ENCODE measurements at regions of chr4 and their contacts with region 1.

Region 1: GRCh38 chr4:17810260-17811077 is at the starts of genes DCAF16 and NCAPG:
- DNase-seq: peak; percentile 98
- ATAC-seq: peak; percentile 88
- H3K4me3 ChIP-seq: peak within 1 kb of the TSS; percentile 90
- H3K27ac ChIP-seq: peak within 1 kb of the TSS; percentile 90
- H3K4me1 ChIP-seq: peaks cover 8% of the 10 kb centered on the region
- H3K27me3 ChIP-seq: no peaks in the 10 kb centered on the region; a peak in 1 of 4 replicates
- CTCF ChIP-seq: 0 out of 6 replicates have a peak, but pooled peaks of 1 of the 3 experiments have one; percentile 1
- EP300 ChIP-seq: peak; percentile 13 to 32; a peak in 1 of 4 replicates
- POLR2A ChIP-seq: peak; percentile 100
- RAD21 ChIP-seq: no peak
- polyA plus RNA-seq, gene DCAF16: 5.8 to 6.1 TPM
- polyA plus RNA-seq, gene NCAPG: 17.3 to 22.9 TPM

Region 2: GRCh38 chr4:17576932-17577665 is 233.4 kb before region 1 on chr4 and contains the start of gene LAP3:
- CTCF ChIA-PET with region 1: interaction called, 4 read pairs
- POLR2A ChIA-PET with region 1: interaction called, 8 read pairs
- RAD21 ChIA-PET with region 1: interaction called, 6 read pairs
- SMC1A ChIA-PET with region 1: interaction called, 5 read pairs
- in situ Hi-C with region 1: no loop called
- intact Hi-C with region 1: loop called (anchors 1 kb)
- DNase-seq: peak; percentile 91
- ATAC-seq: peak; percentile 90
- H3K4me3 ChIP-seq: peak within 1 kb of the TSS; percentile 97
- H3K27ac ChIP-seq: peak within 1 kb of the TSS; percentile 96
- H3K4me1 ChIP-seq: peaks cover 7% of the 10 kb centered on the region
- H3K27me3 ChIP-seq: no peaks in the 10 kb centered on the region
- CTCF ChIP-seq: no peak
- EP300 ChIP-seq: no peak
- POLR2A ChIP-seq: peak; percentile 99
- RAD21 ChIP-seq: no peak
- polyA plus RNA-seq, gene LAP3: 153 to 206 TPM

Region 3: DNA sequence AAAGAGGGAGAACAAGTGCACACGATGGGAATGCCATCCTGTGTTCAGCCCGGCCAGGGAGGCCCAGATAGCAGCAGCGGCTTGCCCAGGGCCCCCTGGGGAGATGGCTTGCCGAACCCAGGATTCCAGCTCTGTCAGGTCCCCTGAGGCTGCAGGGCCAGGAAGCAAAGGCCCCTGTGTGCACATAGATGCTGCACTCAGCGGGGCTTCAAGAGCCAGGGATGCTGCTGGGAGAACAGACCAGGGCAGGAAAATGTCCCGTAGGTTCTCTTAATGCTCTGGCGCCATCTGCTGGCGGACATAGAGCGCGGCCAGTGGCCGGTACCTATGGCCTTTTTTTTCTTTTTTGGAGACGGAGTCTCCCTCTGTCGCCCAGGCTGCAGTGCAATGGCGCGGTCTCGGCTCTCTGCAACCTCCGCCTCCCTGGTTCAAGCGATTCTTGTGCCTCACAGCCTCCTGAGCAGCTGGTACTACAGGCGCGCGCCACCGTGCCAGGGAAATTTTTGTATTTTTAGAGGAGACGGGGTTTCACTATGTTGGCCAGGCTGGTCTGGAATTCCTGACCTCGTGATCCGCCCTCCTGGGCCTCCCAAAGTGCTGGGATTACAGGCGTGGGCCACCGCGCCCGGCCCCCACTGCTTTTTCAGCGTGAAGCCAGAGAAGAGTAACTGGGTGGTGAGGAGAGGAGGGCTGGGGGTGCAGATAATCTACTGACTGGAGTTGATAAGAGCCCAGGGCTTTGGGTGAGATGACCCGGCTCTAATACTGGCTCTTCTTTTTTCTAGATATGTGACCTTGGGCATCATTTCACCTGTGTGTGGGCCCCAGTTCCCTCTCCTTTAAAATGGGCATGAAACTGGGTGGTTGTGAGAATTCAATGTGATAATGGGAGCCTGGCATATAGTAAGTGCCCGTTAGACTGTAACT is 173.5 kb before region 1 on chr4:
- CTCF ChIA-PET with region 1: interaction called, 8 read pairs
- POLR2A ChIA-PET with region 1: no interaction called
- RAD21 ChIA-PET with region 1: no interaction called
- SMC1A ChIA-PET with region 1: interaction called, 7 read pairs
- in situ Hi-C with region 1: no loop called
- intact Hi-C with region 1: loop called (anchors 2 kb)
- DNase-seq: no peak
- ATAC-seq: peak; percentile 99
- H3K4me3 ChIP-seq: no peak overlapping the region
- H3K27ac ChIP-seq: no peak overlapping the region
- H3K4me1 ChIP-seq: no peaks in the 10 kb centered on the region
- H3K27me3 ChIP-seq: no peaks in the 10 kb centered on the region
- CTCF ChIP-seq: peak; percentile 81 to 87 (median 81)
- EP300 ChIP-seq: no peak
- POLR2A ChIP-seq: peak; percentile 50
- RAD21 ChIP-seq: peak; percentile 80

Region 4: DNA sequence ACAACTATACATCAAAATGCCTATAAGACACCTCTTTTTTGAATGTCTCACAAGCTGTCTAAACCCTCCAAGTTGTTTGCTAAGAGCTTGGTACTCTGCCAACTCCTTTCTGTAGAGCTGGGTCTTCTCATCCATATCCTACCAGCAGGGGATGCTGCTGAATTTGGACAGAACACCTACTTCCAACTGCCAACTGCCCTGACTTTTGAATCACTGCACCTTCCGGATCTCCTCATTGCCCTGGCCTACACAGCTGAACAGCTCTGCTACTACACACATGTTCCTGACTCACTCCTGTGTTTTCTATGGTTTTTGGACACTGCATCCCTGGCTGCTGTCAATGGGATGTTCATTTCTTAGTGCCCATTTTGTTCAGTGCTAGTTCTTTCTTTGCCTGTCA is 47.7 kb before region 1 on chr4:
- CTCF ChIA-PET with region 1: interaction called, 13 read pairs
- POLR2A ChIA-PET with region 1: no interaction called
- RAD21 ChIA-PET with region 1: no interaction called
- SMC1A ChIA-PET with region 1: interaction called, 5 read pairs
- in situ Hi-C with region 1: no loop called
- intact Hi-C with region 1: loop called (anchors 5 kb)
- DNase-seq: no peak
- ATAC-seq: peak; percentile 48; the same call in 2 of the 3 replicates
- H3K4me3 ChIP-seq: no peak overlapping the region
- H3K27ac ChIP-seq: no peak overlapping the region
- H3K4me1 ChIP-seq: no peaks in the 10 kb centered on the region
- H3K27me3 ChIP-seq: no peaks in the 10 kb centered on the region
- CTCF ChIP-seq: peak; percentile 35 to 50 (median 42); a peak in 4 of 6 replicates
- EP300 ChIP-seq: no peak
- POLR2A ChIP-seq: no peak
- RAD21 ChIP-seq: peak; percentile 46

Region 5: GRCh38 chr4:17797808-17798207 is 12.7 kb before region 1 on chr4:
- CTCF ChIA-PET with region 1: interaction called, 41 read pairs
- POLR2A ChIA-PET with region 1: interaction called, 6 read pairs
- RAD21 ChIA-PET with region 1: interaction called, 3 read pairs
- SMC1A ChIA-PET with region 1: interaction called, 8 read pairs
- in situ Hi-C with region 1: no loop called
- intact Hi-C with region 1: no loop called
- DNase-seq: no peak
- ATAC-seq: peak; percentile 57
- H3K4me3 ChIP-seq: no peak overlapping the region; the same call in 1 of the 2 replicates
- H3K27ac ChIP-seq: 0 out of 2 replicates have a peak overlapping the region, but pooled peaks have one; percentile 2
- H3K4me1 ChIP-seq: no peaks in the 10 kb centered on the region
- H3K27me3 ChIP-seq: no peaks in the 10 kb centered on the region
- CTCF ChIP-seq: no peak
- EP300 ChIP-seq: no peak
- POLR2A ChIP-seq: no peak
- RAD21 ChIP-seq: no peak

Region 6: DNA sequence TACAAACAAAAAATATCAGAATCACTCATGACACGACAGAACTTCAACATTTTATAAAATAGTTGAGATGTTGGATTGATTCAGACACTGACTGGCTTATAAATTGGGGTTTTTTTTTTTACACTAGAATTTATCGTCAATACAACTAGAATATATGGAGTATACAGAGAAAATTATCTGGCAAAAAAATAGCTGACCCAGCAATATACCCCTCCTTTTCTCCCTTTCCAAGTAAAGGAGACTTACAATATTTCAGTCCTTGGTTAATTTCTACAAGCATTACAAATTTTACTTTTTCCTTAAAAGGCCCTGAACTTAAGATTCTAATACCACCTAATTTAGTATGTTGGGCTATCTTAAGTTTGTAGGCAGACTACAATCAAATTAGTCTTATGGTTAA is 134.8 kb after region 1 on chr4:
- CTCF ChIA-PET with region 1: no interaction called
- POLR2A ChIA-PET with region 1: no interaction called
- RAD21 ChIA-PET with region 1: no interaction called
- SMC1A ChIA-PET with region 1: no interaction called
- in situ Hi-C with region 1: no loop called
- intact Hi-C with region 1: no loop called
- DNase-seq: no peak
- ATAC-seq: no peak
- H3K4me3 ChIP-seq: no peak overlapping the region
- H3K27ac ChIP-seq: no peak overlapping the region
- H3K4me1 ChIP-seq: no peaks in the 10 kb centered on the region
- H3K27me3 ChIP-seq: no peaks in the 10 kb centered on the region
- CTCF ChIP-seq: no peak
- EP300 ChIP-seq: no peak
- POLR2A ChIP-seq: no peak
- RAD21 ChIP-seq: no peak

Region 7: DNA sequence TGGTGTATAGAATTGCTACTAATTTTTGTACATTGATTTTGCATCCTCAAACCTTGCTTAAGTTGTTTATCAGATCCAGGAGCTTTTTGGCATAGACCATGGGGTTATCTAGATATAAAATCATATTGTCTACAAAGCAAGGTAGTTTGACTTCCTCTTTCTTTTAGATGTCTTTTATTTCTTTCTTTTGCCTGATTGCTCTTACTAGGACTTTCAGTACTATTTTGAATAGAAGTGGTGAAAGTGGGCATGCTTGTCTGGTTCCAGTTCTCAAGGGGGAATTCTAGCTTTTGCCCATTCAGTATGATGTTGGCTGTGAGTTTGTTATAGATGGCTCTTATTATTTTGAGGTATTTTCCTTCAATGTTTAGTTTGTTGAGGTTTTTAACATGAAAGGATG is 399.0 kb after region 1 on chr4:
- CTCF ChIA-PET with region 1: no interaction called
- POLR2A ChIA-PET with region 1: no interaction called
- RAD21 ChIA-PET with region 1: no interaction called
- SMC1A ChIA-PET with region 1: no interaction called
- in situ Hi-C with region 1: no loop called
- intact Hi-C with region 1: loop called (anchors 10 kb)
- DNase-seq: peak; percentile 16
- ATAC-seq: peak; percentile 87
- H3K4me3 ChIP-seq: no peak overlapping the region
- H3K27ac ChIP-seq: no peak overlapping the region
- H3K4me1 ChIP-seq: peaks cover 17% of the 10 kb centered on the region
- H3K27me3 ChIP-seq: no peaks in the 10 kb centered on the region
- CTCF ChIP-seq: no peak
- EP300 ChIP-seq: no peak
- POLR2A ChIP-seq: no peak
- RAD21 ChIP-seq: no peak